ENCODE measurements at regions of chrX and their contacts with region 1.

Region 1: DNA sequence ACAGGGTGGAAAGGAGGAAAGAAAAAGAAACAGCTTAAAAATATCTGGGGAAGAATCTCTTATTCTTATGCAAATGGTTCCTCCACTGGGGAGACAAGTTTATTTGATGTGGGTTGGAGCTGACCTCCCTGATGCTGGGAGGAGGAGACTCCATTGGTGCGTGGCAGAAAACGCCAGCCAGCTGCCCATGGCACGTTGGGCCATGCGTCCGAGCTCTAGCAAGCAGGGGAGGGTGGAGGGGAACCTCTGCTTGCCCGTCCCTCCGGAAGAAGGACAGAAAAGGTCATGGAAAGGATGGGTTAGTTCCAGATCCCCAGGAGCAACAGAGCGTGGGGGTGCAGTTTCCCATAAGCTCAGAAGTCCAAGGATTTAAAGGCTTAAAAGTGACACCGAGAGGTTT is 210.4 kb downstream of the KLHL4 start:
- DNase-seq: no peak
- H3K4me3 ChIP-seq: no peak overlapping the region
- H3K27ac ChIP-seq: no peak overlapping the region
- H3K4me1 ChIP-seq: no peaks in the 10 kb centered on the region
- H3K27me3 ChIP-seq: no peaks in the 10 kb centered on the region
- CTCF ChIP-seq: no peak
- EP300 ChIP-seq: no peak
- POLR2A ChIP-seq: no peak

Region 2: GRCh38 chrX:87697409-87697808 is 30.6 kb before region 1 on chrX:
- intact Hi-C with region 1: no loop called
- DNase-seq: no peak
- H3K4me3 ChIP-seq: no peak overlapping the region
- H3K27ac ChIP-seq: no peak overlapping the region
- H3K4me1 ChIP-seq: no peaks in the 10 kb centered on the region
- H3K27me3 ChIP-seq: no peaks in the 10 kb centered on the region
- CTCF ChIP-seq: no peak
- EP300 ChIP-seq: no peak
- POLR2A ChIP-seq: no peak

Region 3: GRCh38 chrX:87755493-87755892 is 27.5 kb after region 1 on chrX:
- intact Hi-C with region 1: loop called (anchors 2 kb)
- DNase-seq: no peak
- H3K4me3 ChIP-seq: no peak overlapping the region
- H3K27ac ChIP-seq: no peak overlapping the region
- H3K4me1 ChIP-seq: no peaks in the 10 kb centered on the region
- H3K27me3 ChIP-seq: no peaks in the 10 kb centered on the region
- CTCF ChIP-seq: no peak
- EP300 ChIP-seq: no peak
- POLR2A ChIP-seq: no peak